ENCODE measurements at regions of chr1 and their contacts with region 1.

Region 1: DNA sequence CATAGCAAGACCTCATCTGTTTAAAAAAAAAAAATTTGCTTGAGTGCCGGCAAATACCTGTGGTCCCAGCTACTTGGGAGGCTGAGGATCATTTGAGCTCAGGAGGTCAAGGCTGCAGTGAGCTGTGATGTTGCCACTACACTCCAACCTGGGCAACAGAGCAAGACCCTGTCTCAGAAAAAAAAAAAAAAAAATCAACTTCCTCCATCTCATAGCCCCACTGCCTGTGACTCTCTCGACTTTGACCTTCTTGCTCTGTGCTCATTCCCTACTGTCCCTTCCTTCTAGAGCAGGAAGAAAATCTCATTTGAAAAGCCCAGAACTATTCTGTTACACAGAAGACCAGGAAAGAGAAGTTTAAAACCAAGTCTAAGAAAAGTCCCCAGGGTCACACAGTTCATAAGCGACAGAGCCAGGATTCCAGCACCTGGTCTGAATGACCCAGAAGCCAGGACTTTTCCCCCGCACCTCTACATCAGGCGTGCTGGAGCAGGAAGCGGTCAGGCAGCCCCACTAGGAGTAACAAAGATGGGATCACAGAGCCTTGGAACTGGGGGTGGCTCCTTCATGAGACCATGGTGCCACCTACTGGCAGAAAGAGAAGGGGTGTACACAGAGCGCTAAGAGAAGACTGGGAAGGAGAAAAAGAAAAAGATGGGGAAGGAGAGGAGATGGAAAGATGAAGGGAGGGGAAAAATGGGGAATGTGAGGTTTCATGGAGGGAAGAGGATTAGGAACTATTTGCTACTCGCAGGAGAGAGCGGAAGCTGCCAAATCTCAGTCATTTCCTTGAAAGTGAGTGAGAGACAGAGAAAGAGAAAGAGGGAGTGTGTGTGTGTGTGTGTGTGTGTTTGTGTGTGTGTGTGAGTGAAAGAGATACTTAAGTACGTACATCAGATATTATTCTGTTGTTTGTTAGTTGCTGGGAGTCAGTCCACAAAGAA is 3.1 kb upstream of the P3R3URF start:
- DNase-seq: peak; percentile 63
- H3K4me3 ChIP-seq: no peak overlapping the region
- H3K27ac ChIP-seq: peak overlapping the region; percentile 43
- H3K4me1 ChIP-seq: peaks cover 58% of the 10 kb centered on the region
- H3K27me3 ChIP-seq: no peaks in the 10 kb centered on the region
- CTCF ChIP-seq: peak; percentile 97

Region 2: DNA sequence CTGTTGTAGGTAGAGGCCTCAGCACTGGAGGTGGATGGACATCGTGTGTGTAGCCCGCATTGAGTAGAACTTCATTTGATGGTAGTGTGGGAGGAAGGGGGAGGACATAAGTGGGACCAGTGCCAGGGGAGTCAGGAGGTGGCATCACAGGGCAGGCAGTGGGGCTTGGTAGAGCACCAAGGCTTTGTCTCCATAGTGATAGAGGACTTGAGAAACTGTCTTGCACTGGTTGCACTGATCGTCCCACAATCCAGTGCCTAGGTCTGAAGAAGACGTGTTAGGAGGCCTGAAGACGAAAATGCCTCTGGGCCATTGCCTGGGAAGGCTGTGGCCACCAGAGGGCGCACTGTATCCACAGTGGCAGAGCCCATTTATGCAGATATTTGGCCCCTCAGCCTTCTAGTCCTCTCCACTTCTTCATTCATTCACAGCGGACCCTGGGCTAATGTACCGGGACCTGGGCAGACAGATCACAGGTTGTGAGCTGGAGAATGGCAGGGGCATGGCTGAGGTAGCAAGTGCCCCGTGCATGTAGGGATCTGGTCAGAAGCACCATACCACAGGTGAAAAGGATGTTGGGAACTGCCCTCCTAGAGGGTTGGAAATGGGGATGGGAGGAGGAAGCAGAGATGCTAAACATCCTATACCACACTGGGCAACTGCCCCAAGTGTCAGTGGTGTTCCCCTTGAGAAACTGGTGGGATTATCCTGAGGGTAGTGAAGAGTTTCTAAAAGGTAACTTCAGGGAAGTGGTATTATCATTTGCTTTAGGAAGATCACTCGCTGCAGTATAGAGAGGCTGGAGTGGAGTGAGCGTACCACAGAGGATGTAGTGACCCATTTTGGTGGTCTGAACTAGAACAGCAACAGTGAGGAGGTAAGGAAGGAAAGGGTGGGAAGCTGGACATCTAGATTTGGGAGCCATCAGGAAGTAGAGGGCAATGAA is 142.2 kb before region 1 on chr1:
- intact Hi-C with region 1: loop called (anchors 2 kb)
- DNase-seq: peak; percentile 84
- H3K4me3 ChIP-seq: no peak overlapping the region
- H3K27ac ChIP-seq: peak overlapping the region; percentile 21
- H3K4me1 ChIP-seq: peaks cover 76% of the 10 kb centered on the region
- H3K27me3 ChIP-seq: no peaks in the 10 kb centered on the region
- CTCF ChIP-seq: peak; percentile 99

Measured in left ventricle myocardium inferior (tissue), 1 donor.